CD14-positive monocyte (primary cell): ENCODE measurements at regions of chr2 and their contacts with region 1.

Region 1: GRCh38 chr2:27016801-27017325 is 15.9 kb upstream of the TMEM214 start:
- DNase-seq: peak; percentile 15 to 47 (median 46)
- H3K4me3 ChIP-seq: no peak overlapping the region
- H3K4me3 Mint-ChIP-seq: no peak overlapping the region
- H3K27ac ChIP-seq: no peak overlapping the region
- H3K27ac Mint-ChIP-seq: no peak overlapping the region
- H3K4me1 ChIP-seq: peaks cover 0 to 4% of the 10 kb centered on the region in 2 donors
- H3K4me1 Mint-ChIP-seq: peaks cover 6% of the 10 kb centered on the region
- H3K27me3 ChIP-seq: no peaks in the 10 kb centered on the region
- H3K27me3 Mint-ChIP-seq: peaks cover 5 to 8% (median 5%) of the 10 kb centered on the region in 3 donors
- CTCF ChIP-seq: peak; percentile 84

Region 2: GRCh38 chr2:26846328-26847306 is 170.2 kb before region 1 on chr2:
- intact Hi-C with region 1: loop called in 1 of 2 experiments (anchors 5 kb)
- DNase-seq: peak; percentile 42 to 57 (median 49)
- H3K4me3 ChIP-seq: no peak overlapping the region
- H3K4me3 Mint-ChIP-seq: peak overlapping the region in 1 of 2 donors; percentile 67
- H3K27ac ChIP-seq: no peak overlapping the region
- H3K27ac Mint-ChIP-seq: no peak overlapping the region
- H3K4me1 ChIP-seq: peaks cover 16 to 25% of the 10 kb centered on the region in 2 donors
- H3K4me1 Mint-ChIP-seq: peaks cover 18% of the 10 kb centered on the region
- H3K27me3 ChIP-seq: peaks cover 52 to 65% of the 10 kb centered on the region in 2 donors
- H3K27me3 Mint-ChIP-seq: peaks cover 51 to 82% (median 66%) of the 10 kb centered on the region in 3 donors
- CTCF ChIP-seq: peak; percentile 85

Region 3: GRCh38 chr2:26959331-26959730 is 57.5 kb before region 1 on chr2:
- intact Hi-C with region 1: loop called (anchors 2 kb)
- DNase-seq: peak; percentile 21 to 49 (median 45)
- H3K4me3 ChIP-seq: no peak overlapping the region
- H3K4me3 Mint-ChIP-seq: no peak overlapping the region
- H3K27ac ChIP-seq: no peak overlapping the region
- H3K27ac Mint-ChIP-seq: peak overlapping the region in 1 of 7 donors; percentile 26
- H3K4me1 ChIP-seq: peaks cover 8 to 13% of the 10 kb centered on the region in 2 donors
- H3K4me1 Mint-ChIP-seq: peaks cover 12% of the 10 kb centered on the region
- H3K27me3 ChIP-seq: peaks cover 0 to 9% of the 10 kb centered on the region in 2 donors
- H3K27me3 Mint-ChIP-seq: peaks cover 20 to 27% (median 25%) of the 10 kb centered on the region in 3 donors
- CTCF ChIP-seq: no peak

Region 4: GRCh38 chr2:26968001-26968400 is 48.9 kb before region 1 on chr2:
- intact Hi-C with region 1: loop called in 1 of 2 experiments (anchors 2 kb)
- DNase-seq: no peak
- H3K4me3 ChIP-seq: no peak overlapping the region
- H3K4me3 Mint-ChIP-seq: no peak overlapping the region
- H3K27ac ChIP-seq: no peak overlapping the region
- H3K27ac Mint-ChIP-seq: no peak overlapping the region
- H3K4me1 ChIP-seq: peaks cover 10 to 18% of the 10 kb centered on the region in 2 donors
- H3K4me1 Mint-ChIP-seq: peaks cover 18% of the 10 kb centered on the region
- H3K27me3 ChIP-seq: peaks cover 0 to 13% of the 10 kb centered on the region in 2 donors
- H3K27me3 Mint-ChIP-seq: peaks cover 15 to 35% (median 30%) of the 10 kb centered on the region in 3 donors
- CTCF ChIP-seq: no peak